ENCODE measurements at regions of chr12 and their contacts with region 1.

Region 1: GRCh38 chr12:46661110-46661845 is 164.5 kb downstream of the SLC38A4 start:
- DNase-seq: peak in 1 of 5 donors; percentile 36
- H3K4me3 ChIP-seq: no peak overlapping the region
- H3K27ac ChIP-seq: peak overlapping the region in 1 of 2 donors; percentile 17
- H3K4me1 ChIP-seq: peaks cover 6% of the 10 kb centered on the region
- H3K27me3 ChIP-seq: no peaks in the 10 kb centered on the region
- CTCF ChIP-seq: peak; percentile 66 to 93 (median 90)
- EP300 ChIP-seq: no peak
- POLR2A ChIP-seq: no peak

Region 2: GRCh38 chr12:46147144-46147543 is 514.1 kb before region 1 on chr12:
- intact Hi-C with region 1: loop called in 2 of 4 experiments (anchors 5 to 10 kb)
- DNase-seq: no peak
- H3K4me3 ChIP-seq: no peak overlapping the region
- H3K27ac ChIP-seq: no peak overlapping the region
- H3K4me1 ChIP-seq: peaks cover 3% of the 10 kb centered on the region
- H3K27me3 ChIP-seq: no peaks in the 10 kb centered on the region
- CTCF ChIP-seq: no peak
- EP300 ChIP-seq: no peak
- POLR2A ChIP-seq: no peak

Region 3: DNA sequence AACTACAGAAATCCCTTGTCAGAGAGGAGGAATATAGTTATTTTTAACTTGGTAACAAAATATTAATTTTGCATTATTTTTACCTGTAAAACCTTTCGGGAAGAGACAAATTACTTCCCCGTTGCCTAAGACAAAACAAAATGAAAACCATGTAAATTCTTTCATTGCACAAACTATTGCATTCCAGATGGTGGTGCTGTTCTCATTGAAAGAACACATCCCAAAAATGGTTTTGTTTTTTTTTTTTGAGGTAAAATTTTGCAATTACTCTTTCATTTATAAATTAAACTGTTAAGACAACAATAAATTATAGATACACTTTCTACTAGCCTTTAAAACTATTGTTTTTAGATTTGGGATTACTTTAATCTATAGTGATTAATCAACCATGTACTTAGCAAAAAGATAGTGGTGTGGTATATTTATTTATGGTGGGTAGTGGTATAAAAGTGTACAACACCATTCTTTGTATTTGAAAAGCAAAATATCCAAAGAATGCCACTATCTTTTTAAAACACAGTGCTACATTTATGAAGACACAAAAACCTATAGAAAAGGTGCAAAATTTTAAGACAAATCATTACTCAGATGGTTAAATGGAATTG is 507.9 kb before region 1 on chr12:
- intact Hi-C with region 1: loop called in 2 of 4 experiments (anchors 5 to 10 kb)
- DNase-seq: no peak
- H3K4me3 ChIP-seq: no peak overlapping the region
- H3K27ac ChIP-seq: no peak overlapping the region
- H3K4me1 ChIP-seq: peaks cover 1% of the 10 kb centered on the region
- H3K27me3 ChIP-seq: no peaks in the 10 kb centered on the region
- CTCF ChIP-seq: peak; percentile 21 to 44 (median 30)
- EP300 ChIP-seq: no peak
- POLR2A ChIP-seq: no peak

Region 4: DNA sequence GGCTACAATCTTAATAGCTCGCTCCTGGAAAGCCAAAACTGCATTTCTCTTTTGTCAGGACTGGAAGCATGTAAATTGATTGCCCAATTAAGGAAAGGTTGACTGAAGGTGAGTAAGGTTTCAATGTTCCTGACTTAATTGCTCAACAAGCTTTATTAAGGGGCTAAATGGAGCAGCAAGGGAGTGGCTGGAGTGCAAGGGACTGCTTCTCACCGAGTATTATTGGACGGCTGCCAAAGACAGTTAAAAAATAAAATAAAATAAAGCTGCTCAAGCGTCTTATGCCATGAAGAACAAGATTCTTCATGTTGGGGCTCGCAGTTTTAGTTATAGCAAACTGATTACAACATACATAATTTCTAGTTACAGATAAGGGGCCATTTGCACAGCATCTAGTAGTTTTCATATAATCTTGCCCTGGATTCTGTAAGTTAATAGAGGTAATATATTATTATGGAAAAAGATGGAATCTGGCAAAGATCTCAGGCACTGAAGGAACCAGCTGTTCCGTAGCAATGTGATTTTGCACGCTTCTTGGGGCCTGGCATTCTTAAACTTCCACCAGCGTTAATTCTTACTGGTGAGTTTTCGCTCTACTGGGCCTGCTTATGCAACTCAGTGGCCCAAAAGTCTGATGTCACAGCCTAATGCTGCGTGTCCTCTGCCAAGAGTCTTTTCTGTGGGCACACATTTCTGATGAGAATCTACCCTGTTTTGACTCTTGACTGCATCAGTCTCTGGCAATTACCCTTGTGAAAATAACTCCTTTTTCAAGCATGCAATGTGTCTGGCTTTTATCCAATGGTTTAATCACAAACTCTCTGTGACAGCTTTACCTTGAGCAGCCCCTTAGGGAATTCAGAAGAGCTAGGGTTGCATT is 500.9 kb before region 1 on chr12:
- intact Hi-C with region 1: loop called in 1 of 4 experiments (anchors 10 kb)
- DNase-seq: peak in 1 of 5 donors; percentile 12
- H3K4me3 ChIP-seq: no peak overlapping the region
- H3K27ac ChIP-seq: peak overlapping the region in 1 of 2 donors; percentile 38
- H3K4me1 ChIP-seq: peaks cover 3% of the 10 kb centered on the region
- H3K27me3 ChIP-seq: no peaks in the 10 kb centered on the region
- CTCF ChIP-seq: no peak
- EP300 ChIP-seq: no peak
- POLR2A ChIP-seq: no peak

Region 5: GRCh38 chr12:46354111-46354798 is 307.0 kb before region 1 on chr12:
- intact Hi-C with region 1: loop called in 1 of 4 experiments (anchors 5 kb)
- DNase-seq: no peak
- H3K4me3 ChIP-seq: no peak overlapping the region
- H3K27ac ChIP-seq: no peak overlapping the region
- H3K4me1 ChIP-seq: peaks cover 1% of the 10 kb centered on the region
- H3K27me3 ChIP-seq: no peaks in the 10 kb centered on the region
- CTCF ChIP-seq: no peak
- EP300 ChIP-seq: no peak
- POLR2A ChIP-seq: no peak

Region 6: DNA sequence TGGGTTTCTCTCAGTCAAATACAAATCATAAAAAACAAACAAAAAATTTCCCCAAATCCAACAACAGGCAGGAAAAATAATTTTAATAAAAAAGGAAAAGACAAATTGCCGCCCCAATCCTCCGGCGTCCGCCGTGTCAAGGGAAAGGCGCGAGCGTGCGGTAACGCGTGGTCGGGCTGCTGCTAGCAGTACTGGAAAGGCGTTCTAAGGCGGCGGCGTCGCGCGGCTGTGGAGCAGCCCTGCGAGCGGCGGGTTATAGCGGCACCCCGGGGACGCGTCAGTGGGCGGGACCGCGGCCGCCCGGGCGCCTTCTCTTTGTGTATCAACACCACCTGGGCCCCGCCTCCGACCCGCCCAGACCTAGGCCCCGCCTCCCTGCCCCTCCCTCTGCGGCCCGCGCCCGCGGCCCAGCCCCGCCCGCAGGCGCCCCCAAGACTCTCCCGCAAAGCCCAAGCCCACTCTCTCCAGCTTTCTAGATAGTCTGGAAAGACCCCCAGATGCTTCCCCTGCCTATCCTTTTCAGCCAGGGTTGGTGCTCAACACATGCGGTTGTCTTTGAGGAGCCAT is 288.7 kb before region 1 on chr12 and contains the start of gene SLC38A2:
- intact Hi-C with region 1: loop called in 3 of 4 experiments (anchors 5 to 10 kb)
- DNase-seq: peak; percentile 98 to 99 (median 99)
- H3K4me3 ChIP-seq: peak within 1 kb of the TSS; percentile 99
- H3K27ac ChIP-seq: peak within 1 kb of the TSS; percentile 95 to 96
- H3K4me1 ChIP-seq: peaks cover 6% of the 10 kb centered on the region
- H3K27me3 ChIP-seq: no peaks in the 10 kb centered on the region
- CTCF ChIP-seq: no peak
- EP300 ChIP-seq: no peak
- POLR2A ChIP-seq: peak; percentile 98
- total RNA-seq, gene SLC38A2: 124 to 390 (median 248) TPM

Region 7: GRCh38 chr12:46382964-46383653 is 278.2 kb before region 1 on chr12:
- intact Hi-C with region 1: loop called in 3 of 4 experiments (anchors 10 kb)
- DNase-seq: peak; percentile 99
- H3K4me3 ChIP-seq: peak overlapping the region; percentile 81
- H3K27ac ChIP-seq: peak overlapping the region; percentile 93 to 100
- H3K4me1 ChIP-seq: peaks cover 10% of the 10 kb centered on the region
- H3K27me3 ChIP-seq: no peaks in the 10 kb centered on the region
- CTCF ChIP-seq: peak in 1 of 3 donors; percentile 35
- EP300 ChIP-seq: peak; percentile 78
- POLR2A ChIP-seq: peak; percentile 93

Region 8: DNA sequence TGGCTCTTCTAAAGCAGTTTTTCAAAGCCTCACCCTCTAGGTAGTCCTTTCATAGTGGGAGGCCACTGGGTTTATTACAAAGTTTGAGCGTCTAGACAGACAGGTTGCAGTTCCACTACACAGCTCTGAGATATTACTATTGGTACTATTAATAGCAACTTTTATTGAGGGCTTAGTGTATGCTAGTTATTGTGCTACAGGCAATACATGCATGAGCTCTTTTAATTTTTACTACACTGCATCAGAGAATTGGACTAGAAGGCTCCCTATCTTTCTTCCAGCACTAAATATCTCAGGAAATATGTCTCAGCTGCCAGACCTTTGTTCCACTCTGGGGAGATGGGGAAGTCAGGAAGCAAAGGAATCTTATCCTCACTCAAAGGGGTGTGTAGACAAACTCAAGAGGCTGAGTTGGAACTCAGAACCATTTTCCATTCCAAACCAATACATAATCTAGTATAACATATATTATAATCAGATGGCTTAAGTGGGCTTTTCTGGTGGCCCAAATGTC is 126.9 kb before region 1 on chr12:
- intact Hi-C with region 1: no loop called
- DNase-seq: no peak
- H3K4me3 ChIP-seq: no peak overlapping the region
- H3K27ac ChIP-seq: peak overlapping the region in 1 of 2 donors; percentile 51
- H3K4me1 ChIP-seq: peaks cover 8% of the 10 kb centered on the region
- H3K27me3 ChIP-seq: no peaks in the 10 kb centered on the region
- CTCF ChIP-seq: no peak
- EP300 ChIP-seq: no peak
- POLR2A ChIP-seq: no peak

Region 9: DNA sequence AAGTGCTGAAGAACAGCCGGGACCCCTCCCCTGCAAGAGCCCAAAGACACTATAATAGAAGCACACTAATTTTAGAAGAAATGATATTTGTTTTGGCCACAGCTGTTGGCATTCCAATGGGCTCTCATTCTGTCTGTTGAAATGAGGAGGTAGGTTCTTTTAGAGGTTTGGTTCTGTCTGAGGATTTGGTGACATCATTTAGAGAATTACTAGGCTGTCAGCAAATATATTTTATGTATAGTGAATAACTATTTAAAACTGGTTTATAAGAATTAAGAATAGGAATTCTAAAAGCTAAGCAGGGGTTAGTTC is 88.0 kb before region 1 on chr12:
- intact Hi-C with region 1: no loop called
- DNase-seq: no peak
- H3K4me3 ChIP-seq: no peak overlapping the region
- H3K27ac ChIP-seq: no peak overlapping the region
- H3K4me1 ChIP-seq: no peaks in the 10 kb centered on the region
- H3K27me3 ChIP-seq: no peaks in the 10 kb centered on the region
- CTCF ChIP-seq: no peak
- EP300 ChIP-seq: no peak
- POLR2A ChIP-seq: no peak